GM12878 (cell line): ENCODE measurements at regions of chr11 and their contacts with region 1.

Region 1: DNA sequence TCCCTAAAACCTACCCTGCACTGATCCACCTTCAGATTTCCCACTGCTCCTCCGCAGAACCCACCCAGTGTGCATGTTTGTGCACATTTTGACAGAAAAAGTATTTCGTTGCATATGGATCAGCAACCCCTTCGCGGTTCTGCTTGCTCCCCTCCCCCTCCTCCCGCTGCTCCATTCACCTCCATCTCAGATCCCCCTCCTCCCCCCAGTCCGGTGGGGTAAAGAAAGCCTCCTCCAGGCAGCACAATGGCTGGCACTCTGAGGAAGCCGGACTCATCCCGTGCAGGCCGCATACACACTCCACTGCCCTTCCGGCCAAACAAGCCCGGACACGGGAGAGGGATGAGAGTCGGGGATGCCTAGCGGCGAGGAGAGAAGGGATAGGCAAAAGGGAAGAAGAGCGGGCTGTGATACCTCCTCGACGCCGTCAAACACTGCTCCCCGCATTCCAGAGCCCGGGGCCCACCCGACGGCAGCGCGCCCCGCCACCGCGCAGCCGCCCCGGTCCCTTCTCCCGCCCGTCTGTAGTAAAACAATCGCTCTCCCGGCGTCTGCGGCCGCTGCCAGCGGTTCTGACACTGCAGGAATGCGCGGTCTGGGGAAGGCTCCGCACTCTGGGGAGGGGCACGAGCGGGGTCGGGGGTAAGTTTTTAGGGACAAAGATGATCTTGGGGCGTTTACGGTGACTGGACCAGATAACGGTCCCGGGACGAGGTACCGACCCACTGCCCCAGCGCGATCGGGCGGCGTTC is 915 bp downstream of the FEZ1 start:
- DNase-seq: no peak
- ATAC-seq: peak; percentile 62
- H3K4me3 ChIP-seq: peak overlapping the region; percentile 57
- H3K27ac ChIP-seq: peak overlapping the region; percentile 58
- H3K4me1 ChIP-seq: peaks cover 4% of the 10 kb centered on the region; the same call in 1 of the 2 replicates
- H3K27me3 ChIP-seq: 0 out of 4 replicates have a peak, but pooled peaks cover 0 to 7% of the 10 kb centered on the region in 2 experiments
- CTCF ChIP-seq: no peak
- EP300 ChIP-seq: no peak
- POLR2A ChIP-seq: no peak
- RAD21 ChIP-seq: no peak

Region 2: DNA sequence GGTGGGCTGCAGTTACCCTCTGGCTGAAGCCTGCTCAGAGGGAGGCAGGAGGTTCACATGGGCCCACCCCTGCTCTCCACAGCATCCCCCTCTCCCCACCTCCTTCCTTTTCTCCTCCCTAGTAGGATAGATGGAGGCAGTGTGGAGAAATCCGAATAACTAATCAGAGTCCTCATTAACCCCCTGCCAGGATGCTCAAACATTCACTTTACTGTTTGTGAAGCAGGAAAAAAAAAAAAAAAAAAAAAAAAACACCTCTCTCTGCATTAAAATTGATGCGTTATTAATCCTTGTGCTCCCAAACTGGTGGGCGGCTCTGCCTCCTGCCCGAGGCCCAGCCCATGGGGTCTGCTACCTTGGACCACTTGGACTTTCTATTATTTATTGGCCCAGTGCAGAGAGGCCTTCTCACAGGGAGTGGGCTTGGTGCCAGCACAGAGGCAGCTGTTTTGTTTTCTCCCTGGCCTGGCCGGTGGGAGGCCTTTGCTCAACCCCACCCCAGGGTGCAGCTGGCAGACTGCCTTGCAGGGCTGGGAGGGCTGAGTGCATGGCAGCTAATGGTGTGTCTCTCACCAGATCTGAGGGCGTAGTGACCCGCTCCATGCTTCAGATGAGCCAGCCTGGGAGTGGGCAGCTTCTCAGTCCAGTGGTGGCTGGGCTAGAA is 179.9 kb before region 1 on chr11:
- CTCF ChIA-PET with region 1: no interaction called
- POLR2A ChIA-PET with region 1: no interaction called
- RAD21 ChIA-PET with region 1: no interaction called
- SMC1A ChIA-PET with region 1: no interaction called
- in situ Hi-C with region 1: no loop called
- intact Hi-C with region 1: no loop called
- DNase-seq: no peak
- ATAC-seq: no peak
- H3K4me3 ChIP-seq: no peak overlapping the region
- H3K27ac ChIP-seq: no peak overlapping the region
- H3K4me1 ChIP-seq: no peaks in the 10 kb centered on the region
- H3K27me3 ChIP-seq: peaks cover 0 to 8% of the 10 kb centered on the region in 2 experiments; a peak in 3 of 4 replicates
- CTCF ChIP-seq: no peak
- EP300 ChIP-seq: no peak
- POLR2A ChIP-seq: no peak
- RAD21 ChIP-seq: no peak

Region 3: GRCh38 chr11:125364121-125364826 is 130.9 kb before region 1 on chr11:
- CTCF ChIA-PET with region 1: no interaction called
- POLR2A ChIA-PET with region 1: no interaction called
- RAD21 ChIA-PET with region 1: no interaction called
- SMC1A ChIA-PET with region 1: no interaction called
- in situ Hi-C with region 1: no loop called
- intact Hi-C with region 1: no loop called
- DNase-seq: no peak
- ATAC-seq: peak; percentile 36; the same call in 2 of the 3 replicates
- H3K4me3 ChIP-seq: no peak overlapping the region
- H3K27ac ChIP-seq: no peak overlapping the region
- H3K4me1 ChIP-seq: no peaks in the 10 kb centered on the region
- H3K27me3 ChIP-seq: peaks cover 2% of the 10 kb centered on the region in 2 experiments; a peak in 2 of 4 replicates
- CTCF ChIP-seq: no peak
- EP300 ChIP-seq: no peak
- POLR2A ChIP-seq: no peak
- RAD21 ChIP-seq: no peak

Region 4: DNA sequence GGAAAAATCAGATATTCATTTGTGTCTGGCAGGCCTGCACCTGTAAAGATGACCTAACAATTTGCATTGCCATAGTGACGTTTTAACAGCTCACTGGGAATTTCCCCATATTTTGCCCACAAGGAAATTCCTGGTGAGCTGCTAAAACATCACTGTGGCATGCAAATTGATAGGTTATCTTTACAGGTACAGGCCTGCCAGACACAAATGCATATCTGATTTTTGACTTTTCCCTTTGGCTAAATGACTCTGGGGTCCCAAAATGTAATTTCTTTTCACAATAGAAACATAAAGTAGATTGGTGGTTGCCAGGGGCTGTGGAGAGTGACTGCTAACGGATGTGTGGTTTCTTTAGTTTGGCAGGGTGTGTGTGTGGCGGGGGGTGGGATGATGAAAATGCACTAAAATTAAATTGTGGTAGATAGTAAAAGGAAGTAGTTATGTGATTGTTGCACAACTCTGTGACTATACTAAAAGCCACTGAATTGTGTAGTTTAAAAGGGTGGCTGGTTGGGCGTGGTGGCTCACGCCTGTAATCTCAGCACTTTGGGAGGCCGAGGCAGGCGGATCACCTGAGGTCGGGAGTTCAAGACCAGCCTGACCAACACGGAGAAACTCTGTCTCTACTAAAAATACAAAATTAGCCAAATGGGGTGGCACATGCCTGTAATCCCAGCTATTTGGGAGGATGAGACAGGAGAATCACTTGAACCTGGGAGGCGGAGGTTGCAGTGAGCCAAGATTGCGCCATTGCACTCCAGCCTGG is 19.4 kb after region 1 on chr11:
- CTCF ChIA-PET with region 1: interaction called, 3 read pairs
- POLR2A ChIA-PET with region 1: interaction called, 3 read pairs
- RAD21 ChIA-PET with region 1: interaction called, 3 read pairs
- SMC1A ChIA-PET with region 1: interaction called, 5 read pairs
- in situ Hi-C with region 1: no loop called
- intact Hi-C with region 1: loop called (anchors 2 kb)
- DNase-seq: peak; percentile 92
- ATAC-seq: peak; percentile 88
- H3K4me3 ChIP-seq: no peak overlapping the region
- H3K27ac ChIP-seq: peak overlapping the region; percentile 80
- H3K4me1 ChIP-seq: peaks cover 46% of the 10 kb centered on the region
- H3K27me3 ChIP-seq: no peaks in the 10 kb centered on the region
- CTCF ChIP-seq: no peak
- EP300 ChIP-seq: peak in 1 of 2 experiments; percentile 86; a peak in 2 of 4 replicates
- POLR2A ChIP-seq: no peak
- RAD21 ChIP-seq: no peak